Activated B cell treated with CpG ODN at 0.5 μM for 24 hours (primary cell): ENCODE measurements at regions of chr12 and their contacts with region 1.

Region 1: DNA sequence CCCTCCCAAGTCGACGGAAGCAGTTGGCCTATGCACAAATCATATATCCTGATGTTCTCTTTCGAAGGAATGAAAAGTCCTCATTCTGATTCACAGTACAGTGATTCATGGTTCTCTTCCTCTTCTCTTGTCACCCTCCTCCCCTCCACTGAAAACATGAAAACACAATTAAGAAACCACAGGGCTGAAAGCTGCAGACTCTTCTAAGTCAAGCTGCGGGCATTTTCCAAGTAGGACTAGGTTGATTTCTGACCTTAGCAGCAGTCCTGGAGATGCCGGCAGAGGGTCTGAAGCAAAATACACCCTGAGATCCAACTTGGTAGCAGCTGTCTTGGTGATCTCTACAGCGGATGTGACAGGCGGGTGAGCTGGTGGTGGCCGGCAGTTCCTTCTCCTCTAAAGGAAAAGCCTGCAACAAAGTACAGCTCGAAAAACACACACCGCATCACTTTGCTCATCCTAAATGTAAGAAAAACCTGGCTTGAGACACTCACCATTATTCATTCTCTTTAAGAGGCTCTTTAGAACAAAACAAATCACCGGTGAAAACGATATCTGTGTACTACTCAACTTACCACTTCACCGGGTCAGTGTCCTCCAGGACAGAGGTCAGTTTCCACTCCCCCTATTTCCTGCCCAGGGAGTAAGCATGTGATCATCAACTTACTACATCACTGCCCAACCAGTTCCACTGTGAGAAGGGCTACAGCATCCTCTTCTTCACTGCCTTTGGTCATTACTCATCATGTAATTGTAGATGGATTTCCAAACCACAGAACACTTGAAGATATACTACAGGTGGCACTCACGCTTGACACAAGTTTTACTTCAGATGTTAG is 6.0 kb downstream of the TMCC3 start:
- DNase-seq: no peak
- ATAC-seq: peak; percentile 60
- H3K4me3 Mint-ChIP-seq: peak overlapping the region; percentile 61
- H3K27ac Mint-ChIP-seq: peak overlapping the region; percentile 73
- H3K4me1 Mint-ChIP-seq: peaks cover 43% of the 10 kb centered on the region
- H3K27me3 Mint-ChIP-seq: no peaks in the 10 kb centered on the region
- CTCF ChIP-seq: no peak

Region 2: DNA sequence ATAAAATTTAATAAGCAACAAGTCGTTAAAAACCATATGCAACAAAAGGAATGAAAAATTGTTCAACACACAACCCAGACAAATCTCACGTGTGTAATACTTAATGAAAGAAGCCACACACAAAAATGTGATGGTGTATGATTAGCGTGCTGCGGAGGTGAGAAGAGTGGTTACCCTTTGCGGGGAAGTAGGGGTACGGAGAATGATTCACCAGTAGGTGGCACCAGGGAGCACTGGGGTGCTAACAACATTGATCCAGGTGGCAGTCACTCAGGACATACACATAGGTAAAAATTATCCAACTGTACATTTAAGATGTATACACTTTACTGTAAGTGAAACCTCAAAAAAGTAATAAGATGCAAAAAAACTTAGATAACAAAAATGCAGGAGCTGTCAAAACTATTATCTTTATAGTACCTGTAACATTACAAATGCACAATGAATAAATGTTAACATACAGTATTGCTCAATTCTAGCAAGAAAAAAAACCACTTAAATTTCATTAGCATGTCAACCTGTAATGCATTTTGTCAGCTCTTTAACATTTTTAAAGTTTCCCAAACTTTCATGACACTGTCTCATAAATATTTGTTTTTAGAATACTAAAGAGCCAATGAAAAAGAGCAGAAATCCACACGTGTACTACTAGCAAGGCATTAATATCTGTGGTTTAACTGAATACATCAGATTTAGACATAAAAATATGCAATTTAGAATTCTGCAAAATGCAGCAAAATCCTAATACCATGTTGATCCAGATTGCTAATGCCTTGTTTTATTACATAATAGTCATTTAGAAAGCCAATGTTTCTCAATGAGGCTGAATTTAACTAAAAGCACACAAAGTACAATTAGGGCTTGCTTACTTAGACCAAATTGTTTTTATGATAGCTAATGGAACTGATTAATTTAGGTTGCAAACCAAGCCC is 40.7 kb before region 1 on chr12:
- CTCF ChIA-PET with region 1: no interaction called
- POLR2A ChIA-PET with region 1: no interaction called
- intact Hi-C with region 1: loop called (anchors 2 kb)
- DNase-seq: peak; percentile 31
- ATAC-seq: peak; percentile 57
- H3K4me3 Mint-ChIP-seq: no peak overlapping the region
- H3K27ac Mint-ChIP-seq: no peak overlapping the region
- H3K4me1 Mint-ChIP-seq: no peaks in the 10 kb centered on the region
- H3K27me3 Mint-ChIP-seq: no peaks in the 10 kb centered on the region
- CTCF ChIP-seq: peak; percentile 24

Region 3: GRCh38 chr12:94621664-94622359 is 22.5 kb before region 1 on chr12:
- CTCF ChIA-PET with region 1: no interaction called
- POLR2A ChIA-PET with region 1: no interaction called
- intact Hi-C with region 1: loop called (anchors 1 kb)
- DNase-seq: no peak
- ATAC-seq: peak; percentile 96
- H3K4me3 Mint-ChIP-seq: peak overlapping the region; percentile 71
- H3K27ac Mint-ChIP-seq: peak overlapping the region; percentile 68
- H3K4me1 Mint-ChIP-seq: peaks cover 24% of the 10 kb centered on the region
- H3K27me3 Mint-ChIP-seq: no peaks in the 10 kb centered on the region
- CTCF ChIP-seq: no peak